Posterior cingulate gyrus (tissue), 11 donors: ENCODE measurements at regions of chr5 and their contacts with region 1.

Region 1: GRCh38 chr5:103475629-103476240 is 86.9 kb downstream of the NUDT12 start:
- DNase-seq: no peak

Region 2: GRCh38 chr5:103232393-103232999 is 243.2 kb before region 1 on chr5:
- intact Hi-C with region 1: loop called (anchors 1 kb)
- DNase-seq: peak in 1 of 10 donors; percentile 17

Region 3: DNA sequence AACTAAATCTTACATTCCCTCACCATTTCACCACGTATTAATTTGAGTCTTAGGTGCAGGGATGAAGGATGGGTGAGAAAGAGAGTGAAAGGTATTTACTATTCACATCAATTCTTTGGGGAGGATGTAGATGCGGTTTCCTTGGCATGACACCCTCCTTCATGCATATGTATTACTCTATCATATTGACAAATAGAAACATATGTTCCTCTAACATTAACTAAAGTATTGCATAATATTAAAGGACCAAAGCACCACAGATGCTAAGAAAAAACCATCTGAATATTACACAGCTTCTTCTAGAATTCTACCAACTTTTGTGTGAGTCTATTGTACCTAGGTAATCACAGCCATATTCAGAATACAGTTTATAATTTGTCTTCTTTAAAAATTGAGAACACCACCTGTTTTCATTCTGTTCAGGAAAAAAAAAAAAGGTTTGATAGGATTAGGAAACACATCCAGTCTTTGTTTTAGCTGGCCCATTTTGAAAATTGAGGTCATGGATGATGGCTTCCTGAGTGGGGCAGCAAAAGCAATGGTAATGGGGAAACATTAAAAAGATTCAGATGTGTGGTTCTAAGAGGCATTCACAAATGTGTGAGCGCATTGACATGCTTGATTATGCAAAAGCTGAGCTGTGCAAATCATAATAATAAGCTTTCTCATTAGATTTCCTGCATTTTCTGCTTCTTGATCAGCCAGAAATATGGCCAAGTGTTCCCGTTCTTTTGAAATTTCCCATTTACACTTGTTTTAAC is 1098.4 kb after region 1 on chr5:
- intact Hi-C with region 1: no loop called
- DNase-seq: no peak